Ovary (tissue), 10 donors: ENCODE measurements at regions of chr2 and their contacts with region 1.

Region 1: GRCh38 chr2:230007931-230008707 is 60.6 kb downstream of the SLC16A14 start:
- DNase-seq: peak; percentile 73 to 88 (median 87)
- H3K4me3 ChIP-seq: no peak overlapping the region
- H3K27ac ChIP-seq: no peak overlapping the region
- H3K4me1 ChIP-seq: peaks cover 10% of the 10 kb centered on the region
- H3K27me3 ChIP-seq: no peaks in the 10 kb centered on the region
- CTCF ChIP-seq: peak; percentile 75 to 85 (median 77)
- EP300 ChIP-seq: no peak
- POLR2A ChIP-seq: no peak

Region 2: DNA sequence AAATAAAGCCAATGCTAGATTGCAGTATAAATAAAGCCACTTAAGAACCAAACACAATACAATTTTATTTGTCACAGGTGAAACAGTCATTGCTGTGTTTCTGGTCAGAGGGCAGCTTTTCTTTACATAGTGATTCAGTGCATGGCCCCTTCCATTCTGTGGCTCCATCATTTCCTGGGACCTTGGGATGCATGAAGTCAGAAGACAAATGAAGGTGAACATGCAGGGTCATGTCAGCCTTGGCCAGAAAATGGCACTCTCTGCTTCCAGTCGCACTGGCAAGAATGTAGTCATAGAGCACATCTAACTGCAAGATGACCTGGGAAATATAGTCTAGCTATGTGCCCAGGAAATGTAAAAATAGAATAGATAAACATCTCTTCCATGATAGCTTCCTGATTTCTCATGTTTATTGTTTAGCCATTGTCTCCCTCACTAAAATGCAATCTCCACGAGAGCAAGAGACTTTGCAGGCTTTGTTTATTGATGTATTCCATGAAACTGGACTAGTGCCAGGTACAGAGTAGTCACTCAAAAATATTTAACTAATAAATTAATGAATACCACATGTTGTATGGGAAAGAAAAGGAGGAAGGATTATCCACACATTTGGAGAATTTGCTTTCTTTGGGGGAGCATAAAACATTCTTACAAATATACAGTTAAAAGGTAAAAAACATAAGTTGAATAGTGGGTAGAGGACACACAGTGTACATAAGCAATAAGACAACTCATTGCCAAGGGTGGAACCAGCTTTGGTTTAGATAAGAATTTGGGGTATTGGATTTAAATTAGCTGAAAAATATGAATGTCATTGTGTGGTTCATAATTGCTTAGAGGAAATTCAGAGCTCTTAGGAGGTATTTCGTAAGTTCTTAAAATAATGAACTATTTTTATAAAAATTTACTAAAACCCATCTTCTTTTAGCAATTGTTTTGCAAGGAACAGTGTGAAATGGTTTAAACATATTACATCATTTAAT is 1080.8 kb before region 1 on chr2:
- intact Hi-C with region 1: no loop called
- DNase-seq: no peak
- H3K4me3 ChIP-seq: no peak overlapping the region
- H3K27ac ChIP-seq: no peak overlapping the region
- H3K4me1 ChIP-seq: no peaks in the 10 kb centered on the region
- H3K27me3 ChIP-seq: no peaks in the 10 kb centered on the region
- CTCF ChIP-seq: no peak
- EP300 ChIP-seq: no peak
- POLR2A ChIP-seq: no peak

Region 3: DNA sequence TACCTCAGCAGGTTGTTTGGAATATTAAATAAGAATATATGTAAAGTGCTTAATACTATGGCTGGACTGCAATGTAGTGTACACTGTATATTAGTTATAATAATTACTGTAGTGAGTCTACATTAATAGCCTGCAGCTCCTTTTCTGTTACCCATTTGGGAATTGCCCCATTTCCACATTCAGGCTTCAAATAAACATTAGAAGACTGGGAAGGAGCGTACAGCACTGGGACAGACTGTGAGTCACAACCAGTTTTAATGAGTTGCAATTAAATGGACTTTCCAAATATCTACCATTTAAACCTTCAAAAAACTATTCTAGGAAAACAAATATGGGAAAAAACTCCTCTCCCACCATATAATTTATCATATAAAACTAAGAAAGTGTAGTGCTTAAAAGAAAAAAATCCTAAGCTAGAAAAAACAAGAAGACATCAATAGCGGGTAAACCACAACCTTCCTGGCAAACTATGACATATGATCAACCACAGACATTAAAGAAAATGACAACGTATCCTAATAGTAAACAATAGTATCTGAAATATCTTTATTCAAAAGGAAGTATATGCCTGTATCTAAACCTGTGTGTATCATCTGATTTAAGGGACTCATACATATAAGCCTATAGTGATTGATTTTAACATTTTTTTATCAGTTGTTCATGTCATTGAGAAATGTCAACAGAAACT is 172.4 kb before region 1 on chr2:
- intact Hi-C with region 1: no loop called
- DNase-seq: no peak
- H3K4me3 ChIP-seq: no peak overlapping the region
- H3K27ac ChIP-seq: no peak overlapping the region
- H3K4me1 ChIP-seq: peaks cover 2% of the 10 kb centered on the region
- H3K27me3 ChIP-seq: no peaks in the 10 kb centered on the region
- CTCF ChIP-seq: no peak
- EP300 ChIP-seq: no peak
- POLR2A ChIP-seq: no peak

Region 4: GRCh38 chr2:229971159-229971790 is 36.8 kb before region 1 on chr2:
- intact Hi-C with region 1: no loop called
- DNase-seq: no peak
- H3K4me3 ChIP-seq: no peak overlapping the region
- H3K27ac ChIP-seq: no peak overlapping the region
- H3K4me1 ChIP-seq: peaks cover 4% of the 10 kb centered on the region
- H3K27me3 ChIP-seq: no peaks in the 10 kb centered on the region
- CTCF ChIP-seq: no peak
- EP300 ChIP-seq: no peak
- POLR2A ChIP-seq: no peak

Region 5: GRCh38 chr2:230068016-230068650 is 60.0 kb after region 1 on chr2:
- intact Hi-C with region 1: loop called in 2 of 4 experiments (anchors 5 to 10 kb)
- DNase-seq: peak; percentile 58 to 79 (median 75)
- H3K4me3 ChIP-seq: peak overlapping the region; percentile 65
- H3K27ac ChIP-seq: peak overlapping the region; percentile 47 to 92
- H3K4me1 ChIP-seq: no peaks in the 10 kb centered on the region
- H3K27me3 ChIP-seq: no peaks in the 10 kb centered on the region
- CTCF ChIP-seq: peak in 1 of 3 donors; percentile 31
- EP300 ChIP-seq: no peak
- POLR2A ChIP-seq: no peak

Region 6: GRCh38 chr2:230160112-230160660 is 152.1 kb after region 1 on chr2:
- intact Hi-C with region 1: loop called (anchors 2 to 10 kb)
- DNase-seq: peak; percentile 38 to 66 (median 61)
- H3K4me3 ChIP-seq: no peak overlapping the region
- H3K27ac ChIP-seq: no peak overlapping the region
- H3K4me1 ChIP-seq: peaks cover 1% of the 10 kb centered on the region
- H3K27me3 ChIP-seq: no peaks in the 10 kb centered on the region
- CTCF ChIP-seq: peak; percentile 55 to 76 (median 70)
- EP300 ChIP-seq: no peak
- POLR2A ChIP-seq: no peak

Region 7: GRCh38 chr2:230614913-230615332 is 606.8 kb after region 1 on chr2:
- intact Hi-C with region 1: loop called in 1 of 4 experiments (anchors 5 kb)
- DNase-seq: no peak
- H3K4me3 ChIP-seq: no peak overlapping the region
- H3K27ac ChIP-seq: no peak overlapping the region
- H3K4me1 ChIP-seq: no peaks in the 10 kb centered on the region
- H3K27me3 ChIP-seq: no peaks in the 10 kb centered on the region
- CTCF ChIP-seq: no peak
- EP300 ChIP-seq: no peak
- POLR2A ChIP-seq: no peak

Region 8: DNA sequence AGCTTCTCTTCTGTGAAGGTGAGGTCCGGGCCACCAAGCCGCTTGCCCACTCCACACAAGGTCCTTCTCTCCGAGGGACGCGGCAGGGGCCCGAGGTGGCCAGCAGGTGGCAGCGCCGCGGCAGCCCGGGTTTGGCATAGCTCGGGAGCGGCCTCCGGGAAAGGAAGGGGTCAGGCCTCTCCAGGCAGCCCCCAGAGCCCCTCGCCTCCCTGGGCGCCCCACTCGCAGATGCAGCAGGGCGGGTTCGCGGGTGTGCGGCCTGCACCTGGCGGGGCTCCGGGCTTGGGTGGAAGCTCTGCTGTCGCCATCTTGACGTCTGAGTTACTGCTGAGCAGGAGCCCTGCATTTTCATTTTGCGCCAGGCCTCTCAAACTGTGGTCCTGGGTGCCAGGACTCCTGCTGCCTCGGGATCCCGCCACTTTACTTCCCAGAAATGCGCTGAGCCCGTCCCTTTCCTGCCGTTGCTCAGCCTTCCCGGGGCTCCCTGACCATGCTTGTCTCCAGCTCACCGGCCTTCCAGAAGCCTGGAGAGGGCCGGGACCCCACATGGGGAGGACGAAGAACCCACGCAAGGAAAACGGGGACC is 1474.8 kb after region 1 on chr2:
- intact Hi-C with region 1: no loop called
- DNase-seq: peak; percentile 71 to 83 (median 80)
- H3K4me3 ChIP-seq: peak overlapping the region; percentile 42
- H3K27ac ChIP-seq: peak overlapping the region; percentile 67 to 73
- H3K4me1 ChIP-seq: peaks cover 1% of the 10 kb centered on the region
- H3K27me3 ChIP-seq: no peaks in the 10 kb centered on the region
- CTCF ChIP-seq: peak; percentile 76 to 89 (median 79)
- EP300 ChIP-seq: no peak
- POLR2A ChIP-seq: no peak